Naive thymus-derived CD8-positive, alpha-beta T cell (primary cell): ENCODE measurements at regions of chr2 and their contacts with region 1.

Region 1: GRCh38 chr2:234496835-234497591 is at the start of gene ARL4C:
- DNase-seq: peak; percentile 60 to 82 (median 72)
- ATAC-seq: peak; percentile 36 to 45
- H3K4me3 Mint-ChIP-seq: peak within 1 kb of the TSS; percentile 88 to 100 (median 98)
- H3K27ac Mint-ChIP-seq: peak within 1 kb of the TSS; percentile 96 to 99 (median 98)
- H3K4me1 Mint-ChIP-seq: peaks cover 36 to 50% (median 43%) of the 10 kb centered on the region in 4 donors
- H3K27me3 Mint-ChIP-seq: peaks cover 0 to 1% (median 0%) of the 10 kb centered on the region in 5 donors
- polyA plus RNA-seq, gene ARL4C: 52.9 to 140 (median 112) TPM

Region 2: GRCh38 chr2:234288974-234289455 is 208.0 kb before region 1 on chr2:
- POLR2A ChIA-PET with region 1: interaction called, 132 read pairs
- DNase-seq: peak; percentile 37 to 83 (median 64)
- ATAC-seq: no peak
- H3K4me3 Mint-ChIP-seq: peak overlapping the region in 9 of 10 donors; percentile 2 to 61 (median 32)
- H3K27ac Mint-ChIP-seq: peak overlapping the region; percentile 94 to 100 (median 99)
- H3K4me1 Mint-ChIP-seq: peaks cover 32 to 71% (median 61%) of the 10 kb centered on the region in 4 donors
- H3K27me3 Mint-ChIP-seq: no peaks in the 10 kb centered on the region

Region 3: DNA sequence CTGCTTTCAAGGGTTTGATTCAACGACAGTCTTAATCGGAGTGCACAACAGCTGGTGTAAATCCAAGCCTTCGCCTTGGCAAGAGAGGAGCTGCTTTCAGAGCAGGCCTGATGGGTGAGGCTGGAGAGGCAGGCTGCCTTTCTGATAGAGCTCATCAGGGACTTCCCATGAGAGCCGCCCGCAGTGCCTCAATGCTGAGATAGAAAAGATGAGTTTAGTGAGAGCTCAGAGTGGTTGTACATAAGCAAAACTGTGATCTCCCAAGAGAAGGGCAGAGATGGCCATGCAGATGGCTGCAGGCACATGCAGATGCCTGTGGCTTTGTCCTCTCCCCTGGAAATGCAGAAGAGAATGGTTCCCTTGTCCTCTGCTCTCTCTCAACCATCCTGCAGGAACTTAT is 122.3 kb before region 1 on chr2:
- POLR2A ChIA-PET with region 1: interaction called, 17 read pairs
- DNase-seq: no peak
- ATAC-seq: no peak
- H3K4me3 Mint-ChIP-seq: no peak overlapping the region
- H3K27ac Mint-ChIP-seq: peak overlapping the region in 6 of 10 donors; percentile 47 to 96 (median 84)
- H3K4me1 Mint-ChIP-seq: peaks cover 27 to 54% (median 52%) of the 10 kb centered on the region in 4 donors
- H3K27me3 Mint-ChIP-seq: no peaks in the 10 kb centered on the region

Region 4: DNA sequence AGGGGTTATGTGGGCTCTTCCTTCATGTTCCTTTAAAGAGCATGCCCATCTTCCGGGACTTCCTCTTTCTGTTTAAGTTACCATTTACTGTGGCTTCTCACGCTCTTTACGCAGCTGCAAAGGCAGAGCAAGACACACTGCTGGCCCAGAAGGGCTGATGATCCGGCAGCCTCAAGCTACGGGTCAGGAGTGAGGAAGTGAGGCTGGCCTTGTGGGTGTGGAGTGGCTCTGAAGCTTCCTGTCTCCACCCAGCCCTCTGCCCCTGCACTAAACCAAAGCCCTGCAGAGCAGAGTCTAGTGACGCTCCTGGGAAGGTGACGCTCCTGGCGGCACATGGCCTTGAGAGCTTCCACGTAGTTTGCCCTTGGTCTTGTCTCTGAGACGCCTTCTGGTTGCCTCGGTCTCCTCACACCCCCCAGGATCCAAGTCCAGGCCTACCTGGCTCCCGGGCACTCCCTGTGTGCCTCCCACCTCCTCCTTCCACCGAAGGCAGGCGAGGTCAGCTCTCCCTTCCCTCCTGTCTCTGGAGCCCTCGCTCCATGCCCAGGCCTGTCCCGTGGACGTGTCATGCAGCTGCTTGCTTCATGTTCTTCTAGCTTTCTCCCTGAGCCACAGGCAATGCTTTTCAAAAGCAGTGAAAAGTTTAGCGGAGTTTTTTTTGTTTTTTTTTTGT is 50.5 kb before region 1 on chr2:
- POLR2A ChIA-PET with region 1: interaction called, 289 read pairs
- DNase-seq: peak; percentile 36 to 91 (median 84)
- ATAC-seq: peak; percentile 65 to 87
- H3K4me3 Mint-ChIP-seq: peak overlapping the region; percentile 38 to 89 (median 80)
- H3K27ac Mint-ChIP-seq: peak overlapping the region; percentile 95 to 100 (median 99)
- H3K4me1 Mint-ChIP-seq: peaks cover 48 to 95% (median 90%) of the 10 kb centered on the region in 4 donors
- H3K27me3 Mint-ChIP-seq: no peaks in the 10 kb centered on the region

Region 5: GRCh38 chr2:234483568-234484251 is 13.3 kb before region 1 on chr2:
- POLR2A ChIA-PET with region 1: interaction called, 18 read pairs
- DNase-seq: peak; percentile 59 to 94 (median 86)
- ATAC-seq: peak; percentile 74 to 79
- H3K4me3 Mint-ChIP-seq: peak overlapping the region; percentile 41 to 84 (median 79)
- H3K27ac Mint-ChIP-seq: peak overlapping the region; percentile 89 to 99 (median 97)
- H3K4me1 Mint-ChIP-seq: peaks cover 24 to 92% (median 73%) of the 10 kb centered on the region in 4 donors
- H3K27me3 Mint-ChIP-seq: no peaks in the 10 kb centered on the region

Region 6: GRCh38 chr2:234606896-234607295 is 109.9 kb after region 1 on chr2:
- POLR2A ChIA-PET with region 1: no interaction called
- DNase-seq: no peak
- ATAC-seq: no peak
- H3K4me3 Mint-ChIP-seq: no peak overlapping the region
- H3K27ac Mint-ChIP-seq: no peak overlapping the region
- H3K4me1 Mint-ChIP-seq: no peaks in the 10 kb centered on the region
- H3K27me3 Mint-ChIP-seq: peaks cover 12 to 62% (median 18%) of the 10 kb centered on the region in 5 donors

Region 7: GRCh38 chr2:234620018-234620417 is 123.0 kb after region 1 on chr2:
- POLR2A ChIA-PET with region 1: no interaction called
- DNase-seq: no peak
- ATAC-seq: no peak
- H3K4me3 Mint-ChIP-seq: peak overlapping the region in 3 of 10 donors; percentile 1 to 36 (median 5)
- H3K27ac Mint-ChIP-seq: no peak overlapping the region
- H3K4me1 Mint-ChIP-seq: peaks cover 4 to 12% (median 8%) of the 10 kb centered on the region in 4 donors
- H3K27me3 Mint-ChIP-seq: peaks cover 0 to 2% (median 0%) of the 10 kb centered on the region in 5 donors